Heart left ventricle (tissue), 16 donors: ENCODE measurements at regions of chr11 and their contacts with region 1.

Region 1: DNA sequence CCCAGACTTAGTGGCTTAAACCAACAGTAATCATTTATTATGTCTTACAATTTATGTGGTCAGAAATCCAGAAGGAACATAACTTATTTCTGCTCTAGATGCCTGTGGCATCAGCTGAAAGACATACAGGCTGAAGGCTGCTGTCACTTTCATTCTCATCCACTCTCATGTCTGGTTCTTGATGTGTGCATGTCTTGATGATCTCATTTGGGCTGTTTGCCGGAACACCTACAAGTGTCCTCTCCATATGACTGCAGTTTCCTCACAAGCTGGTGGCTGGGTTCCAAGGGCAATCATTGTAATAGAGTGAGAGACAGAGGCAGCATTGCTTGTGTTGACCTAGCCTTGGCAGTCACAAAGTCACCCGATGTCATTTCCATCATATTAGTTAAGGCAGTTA is 1375.9 kb upstream of the RAG2 start:
- DNase-seq: no peak
- ATAC-seq: no peak
- H3K4me3 ChIP-seq: no peak overlapping the region
- H3K27ac ChIP-seq: no peak overlapping the region
- H3K4me1 ChIP-seq: peaks cover 0 to 14% (median 0%) of the 10 kb centered on the region in 12 donors
- H3K27me3 ChIP-seq: no peaks in the 10 kb centered on the region
- CTCF ChIP-seq: no peak
- POLR2A ChIP-seq: no peak

Region 2: DNA sequence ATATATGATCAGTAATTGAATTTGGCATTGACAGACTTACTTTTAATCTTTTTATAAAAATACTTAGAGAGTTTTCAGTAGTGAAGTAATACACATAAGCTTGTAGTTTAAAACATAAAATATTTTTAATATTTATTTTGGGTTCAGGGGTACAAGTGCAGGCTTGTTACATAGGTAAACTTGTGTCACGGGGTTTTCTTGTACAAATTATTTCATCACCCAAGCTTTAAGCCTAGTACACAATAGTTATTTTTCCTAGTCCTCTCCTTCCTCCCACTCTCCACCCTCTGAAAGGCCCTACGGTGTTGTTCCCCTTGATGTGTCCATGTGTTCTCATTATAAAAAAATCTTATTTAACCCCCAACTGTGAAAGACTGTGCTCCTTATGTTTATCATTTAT is 21.9 kb after region 1 on chr11:
- intact Hi-C with region 1: loop called in 1 of 10 experiments (anchors 1 kb)
- DNase-seq: no peak
- ATAC-seq: no peak
- H3K4me3 ChIP-seq: no peak overlapping the region
- H3K27ac ChIP-seq: no peak overlapping the region
- H3K4me1 ChIP-seq: no peaks in the 10 kb centered on the region
- H3K27me3 ChIP-seq: no peaks in the 10 kb centered on the region
- CTCF ChIP-seq: no peak
- POLR2A ChIP-seq: no peak